GM13976 (cell line): ENCODE measurements at regions of chr4 and their contacts with region 1.

Region 1: GRCh38 chr4:77385124-77385969 is 220.3 kb upstream of the CXCL13 start:
- DNase-seq: peak; percentile 36
- CTCF ChIP-seq: peak; percentile 72

Region 2: GRCh38 chr4:77629885-77630284 is 244.5 kb after region 1 on chr4:
- in situ Hi-C with region 1: loop called (anchors 10 kb)
- DNase-seq: peak; percentile 28
- CTCF ChIP-seq: no peak